ENCODE measurements at regions of chr6 and their contacts with region 1.

Region 1: GRCh38 chr6:137717074-137718073 is 149.7 kb upstream of the TNFAIP3 start:
- DNase-seq: peak; percentile 76
- H3K4me3 Mint-ChIP-seq: peak overlapping the region; percentile 6
- H3K27ac Mint-ChIP-seq: peak overlapping the region; percentile 94
- H3K4me1 Mint-ChIP-seq: peaks cover 65% of the 10 kb centered on the region
- H3K27me3 Mint-ChIP-seq: no peaks in the 10 kb centered on the region

Region 2: DNA sequence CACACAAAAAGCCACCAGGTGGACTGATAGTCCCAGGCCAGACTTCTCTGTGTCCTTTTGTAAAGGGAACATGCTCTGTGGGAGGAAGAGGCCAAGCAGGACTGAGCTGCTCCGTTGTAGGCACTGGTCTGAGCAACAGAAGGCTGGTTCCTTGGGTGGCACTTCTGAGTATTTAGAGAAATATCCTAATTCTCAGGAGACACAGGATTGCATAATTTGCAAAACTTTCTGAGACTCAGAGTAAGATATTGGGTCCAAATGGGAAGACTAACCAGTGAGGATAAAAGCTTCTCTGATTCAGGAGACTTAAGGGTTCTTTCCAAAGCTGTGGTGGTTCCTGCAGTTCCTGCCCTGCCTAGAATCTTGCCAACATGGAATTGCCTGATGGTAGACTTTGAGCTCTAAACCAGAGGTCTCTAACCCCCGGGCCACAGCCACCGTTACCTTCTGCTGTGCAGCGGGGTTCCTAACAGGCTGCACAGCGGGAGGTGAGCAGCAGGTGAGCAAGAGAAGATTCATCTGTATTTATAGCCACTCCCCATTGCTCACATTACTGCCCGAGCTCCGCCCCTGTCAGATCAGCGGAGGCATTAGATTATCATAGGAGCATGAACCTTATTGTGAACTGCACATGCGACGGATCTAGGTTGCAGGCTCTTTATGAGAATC is 330.1 kb before region 1 on chr6:
- intact Hi-C with region 1: no loop called
- DNase-seq: no peak
- H3K4me3 Mint-ChIP-seq: no peak overlapping the region
- H3K27ac Mint-ChIP-seq: no peak overlapping the region
- H3K4me1 Mint-ChIP-seq: peaks cover 33% of the 10 kb centered on the region
- H3K27me3 Mint-ChIP-seq: no peaks in the 10 kb centered on the region

Region 3: DNA sequence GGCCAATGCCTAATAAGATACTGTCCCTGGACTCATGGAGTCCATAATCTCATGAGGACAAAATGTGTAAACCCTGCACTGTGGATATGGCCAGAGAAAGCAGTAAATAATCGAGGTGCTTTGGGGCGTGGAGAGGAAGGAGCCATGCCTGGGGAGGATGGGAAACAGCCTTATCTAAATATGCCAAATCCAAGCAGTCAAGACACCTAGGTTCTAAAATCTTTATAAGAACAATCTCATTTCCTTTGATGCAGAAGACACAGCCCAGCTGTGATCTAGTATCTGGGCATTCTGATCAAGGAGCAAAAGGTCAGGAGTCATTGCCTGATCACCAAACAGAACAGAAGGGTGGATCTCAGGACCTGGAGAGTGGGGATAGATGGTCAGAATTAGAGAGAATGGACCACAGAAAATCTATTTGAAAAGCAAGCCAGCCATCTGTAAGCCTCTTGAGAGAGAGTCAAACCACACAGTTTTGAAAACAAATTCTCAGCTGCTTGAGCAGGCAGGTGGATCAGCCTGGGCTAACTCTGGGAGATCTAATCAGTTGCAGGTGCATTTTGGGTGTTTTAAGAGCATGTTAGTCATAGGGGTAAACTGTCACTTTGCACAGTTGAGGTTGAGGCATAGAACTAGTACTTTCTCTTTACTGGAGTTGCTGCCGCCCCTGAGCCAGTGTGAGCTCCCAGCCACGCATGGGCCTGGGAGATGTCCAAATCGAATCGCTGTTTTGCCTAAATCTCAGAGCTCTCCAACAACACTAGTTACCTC is 18.9 kb after region 1 on chr6:
- intact Hi-C with region 1: loop called (anchors 1 kb)
- DNase-seq: peak; percentile 50
- H3K4me3 Mint-ChIP-seq: peak overlapping the region; percentile 38
- H3K27ac Mint-ChIP-seq: peak overlapping the region; percentile 84
- H3K4me1 Mint-ChIP-seq: peaks cover 62% of the 10 kb centered on the region
- H3K27me3 Mint-ChIP-seq: no peaks in the 10 kb centered on the region

Region 4: GRCh38 chr6:137746264-137746663 is 28.9 kb after region 1 on chr6:
- intact Hi-C with region 1: no loop called
- DNase-seq: no peak
- H3K4me3 Mint-ChIP-seq: no peak overlapping the region
- H3K27ac Mint-ChIP-seq: no peak overlapping the region
- H3K4me1 Mint-ChIP-seq: peaks cover 37% of the 10 kb centered on the region
- H3K27me3 Mint-ChIP-seq: no peaks in the 10 kb centered on the region

Region 5: DNA sequence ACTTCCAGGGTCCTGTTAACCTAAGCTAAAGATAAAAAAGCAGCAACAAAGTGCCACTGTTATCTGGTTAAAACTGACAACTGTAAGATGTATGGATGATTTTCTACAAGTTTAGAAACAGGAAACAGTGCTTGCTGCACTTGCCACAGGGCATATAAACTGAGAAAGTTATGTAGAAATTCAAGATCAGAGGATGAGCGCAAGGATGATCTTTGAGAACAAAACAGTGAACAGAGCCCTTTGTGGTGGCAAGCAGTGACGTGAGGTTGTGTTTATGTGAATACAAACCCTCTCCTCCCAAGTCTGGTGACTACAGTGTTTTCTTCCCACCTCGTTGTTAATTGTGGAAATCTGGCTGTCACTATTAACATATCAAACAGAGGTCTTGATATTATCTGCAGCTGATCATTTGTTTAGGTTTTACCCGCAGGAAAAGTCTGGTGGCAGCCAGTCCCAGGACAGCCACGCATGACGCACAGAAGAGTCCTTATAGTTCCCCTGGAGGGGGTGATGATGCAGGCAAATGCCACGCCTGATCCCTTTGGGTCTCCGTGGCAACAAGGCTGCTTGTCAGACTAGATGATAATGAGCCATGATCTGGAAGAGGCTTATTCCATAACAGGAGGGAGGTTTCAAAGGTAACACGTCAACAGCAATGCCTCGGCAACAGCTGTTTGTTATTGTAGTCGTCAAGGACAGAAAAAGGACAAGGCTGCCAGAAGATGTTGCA is 106.6 kb after region 1 on chr6:
- intact Hi-C with region 1: loop called (anchors 1 kb)
- DNase-seq: peak; percentile 70
- H3K4me3 Mint-ChIP-seq: peak overlapping the region; percentile 81
- H3K27ac Mint-ChIP-seq: peak overlapping the region; percentile 96
- H3K4me1 Mint-ChIP-seq: peaks cover 80% of the 10 kb centered on the region
- H3K27me3 Mint-ChIP-seq: no peaks in the 10 kb centered on the region

Region 6: DNA sequence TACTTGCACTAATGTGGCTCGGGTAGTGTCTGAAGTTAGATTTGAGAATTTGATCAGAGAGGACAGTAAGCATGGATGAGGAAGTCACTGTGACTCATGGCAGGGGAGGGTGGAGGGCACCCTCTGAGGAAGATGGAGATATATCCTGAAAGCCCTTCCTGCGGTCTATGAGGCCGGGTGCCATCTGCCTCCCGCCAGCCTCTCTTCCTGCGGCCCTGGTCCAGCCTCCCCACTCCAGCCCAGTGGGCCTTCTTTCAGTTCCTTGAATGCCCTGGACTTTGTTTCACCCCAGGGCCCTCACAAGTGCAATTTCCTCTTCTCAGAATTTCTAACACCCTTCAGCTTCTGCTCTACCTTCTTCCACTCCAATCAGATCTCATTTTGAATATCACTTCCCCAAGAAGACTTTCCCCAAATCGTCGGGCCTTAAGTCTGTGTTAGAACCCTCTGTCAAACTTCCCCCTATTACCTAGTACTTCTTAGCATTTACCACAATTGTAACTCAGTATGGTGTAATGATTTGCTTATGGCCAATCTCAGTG is 129.5 kb after region 1 on chr6:
- intact Hi-C with region 1: loop called (anchors 1 kb)
- DNase-seq: no peak
- H3K4me3 Mint-ChIP-seq: no peak overlapping the region
- H3K27ac Mint-ChIP-seq: no peak overlapping the region
- H3K4me1 Mint-ChIP-seq: peaks cover 19% of the 10 kb centered on the region
- H3K27me3 Mint-ChIP-seq: no peaks in the 10 kb centered on the region

Region 7: GRCh38 chr6:137978252-137978896 is 261.0 kb after region 1 on chr6:
- intact Hi-C with region 1: no loop called
- DNase-seq: no peak
- H3K4me3 Mint-ChIP-seq: no peak overlapping the region
- H3K27ac Mint-ChIP-seq: no peak overlapping the region
- H3K4me1 Mint-ChIP-seq: peaks cover 40% of the 10 kb centered on the region
- H3K27me3 Mint-ChIP-seq: no peaks in the 10 kb centered on the region